SK-N-SH (cell line): ENCODE measurements at regions of chr2 and their contacts with region 1.

Region 1: GRCh38 chr2:26605195-26605998 is 35.8 kb downstream of the CIB4 start:
- DNase-seq: peak; percentile 78
- H3K4me3 ChIP-seq: no peak overlapping the region; a peak in 1 of 4 replicates
- H3K27ac ChIP-seq: no peak overlapping the region
- H3K4me1 ChIP-seq: no peaks in the 10 kb centered on the region; a peak in 1 of 4 replicates
- H3K27me3 ChIP-seq: peaks cover 21% of the 10 kb centered on the region
- CTCF ChIP-seq: peak; percentile 94
- EP300 ChIP-seq: no peak
- RAD21 ChIP-seq: peak; percentile 99

Region 2: GRCh38 chr2:26633351-26633945 is 28.1 kb after region 1 on chr2:
- CTCF ChIA-PET with region 1: interaction called, 16 read pairs
- POLR2A ChIA-PET with region 1: no interaction called
- DNase-seq: no peak
- H3K4me3 ChIP-seq: no peak overlapping the region
- H3K27ac ChIP-seq: no peak overlapping the region
- H3K4me1 ChIP-seq: peaks cover 0 to 15% of the 10 kb centered on the region in 2 experiments; a peak in 1 of 4 replicates
- H3K27me3 ChIP-seq: 0 out of 2 replicates have a peak, but pooled peaks cover 26% of the 10 kb centered on the region
- CTCF ChIP-seq: no peak
- EP300 ChIP-seq: no peak
- RAD21 ChIP-seq: no peak

Region 3: DNA sequence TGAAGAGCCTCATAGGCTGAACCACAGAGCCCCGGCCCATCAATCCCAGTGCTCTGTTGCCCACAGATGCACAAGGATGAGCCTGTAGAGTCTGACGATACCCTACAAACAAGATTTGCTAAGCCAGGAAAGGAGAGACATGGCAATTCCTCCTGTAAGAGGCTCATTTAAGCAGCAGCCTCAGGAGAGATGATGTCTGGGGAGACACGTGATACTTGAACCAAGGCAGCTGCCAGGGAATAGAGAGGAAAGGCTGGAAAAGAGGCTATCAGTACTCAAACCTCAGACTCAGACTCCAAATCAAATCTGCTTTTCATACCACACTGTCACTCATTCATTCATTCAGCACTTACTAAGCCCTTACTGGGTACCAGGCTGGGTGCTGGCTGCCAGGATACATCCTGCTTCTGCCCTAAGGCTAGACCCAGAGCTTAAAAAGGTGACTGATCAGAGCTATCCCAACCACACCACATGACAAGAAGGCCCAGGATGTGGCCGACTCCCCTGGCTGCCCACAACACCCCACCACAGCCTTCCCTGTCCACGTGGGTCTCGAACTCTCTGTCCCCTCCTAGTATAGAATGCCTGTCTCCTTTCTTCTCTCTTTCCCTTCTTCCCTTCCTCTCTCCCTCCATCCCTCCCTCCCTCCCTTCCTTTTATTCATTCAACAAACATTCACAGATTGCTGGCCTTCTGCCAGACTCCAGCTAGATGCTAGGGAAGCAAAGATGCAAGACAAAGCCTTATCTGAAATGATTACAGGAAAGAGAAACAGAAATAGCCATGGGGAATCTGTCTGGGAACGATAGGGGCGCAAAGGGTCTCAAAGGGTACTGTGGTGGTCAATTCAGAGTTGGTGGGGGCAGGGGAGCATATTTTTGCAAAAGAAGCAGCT is 63.7 kb after region 1 on chr2:
- CTCF ChIA-PET with region 1: interaction called, 14 read pairs
- POLR2A ChIA-PET with region 1: no interaction called
- DNase-seq: no peak
- H3K4me3 ChIP-seq: no peak overlapping the region
- H3K27ac ChIP-seq: no peak overlapping the region
- H3K4me1 ChIP-seq: peaks cover 0 to 3% of the 10 kb centered on the region in 2 experiments; a peak in 1 of 4 replicates
- H3K27me3 ChIP-seq: peaks cover 23% of the 10 kb centered on the region; the same call in 1 of the 2 replicates
- CTCF ChIP-seq: no peak
- EP300 ChIP-seq: no peak; a peak in 1 of 4 replicates
- RAD21 ChIP-seq: no peak

Region 4: DNA sequence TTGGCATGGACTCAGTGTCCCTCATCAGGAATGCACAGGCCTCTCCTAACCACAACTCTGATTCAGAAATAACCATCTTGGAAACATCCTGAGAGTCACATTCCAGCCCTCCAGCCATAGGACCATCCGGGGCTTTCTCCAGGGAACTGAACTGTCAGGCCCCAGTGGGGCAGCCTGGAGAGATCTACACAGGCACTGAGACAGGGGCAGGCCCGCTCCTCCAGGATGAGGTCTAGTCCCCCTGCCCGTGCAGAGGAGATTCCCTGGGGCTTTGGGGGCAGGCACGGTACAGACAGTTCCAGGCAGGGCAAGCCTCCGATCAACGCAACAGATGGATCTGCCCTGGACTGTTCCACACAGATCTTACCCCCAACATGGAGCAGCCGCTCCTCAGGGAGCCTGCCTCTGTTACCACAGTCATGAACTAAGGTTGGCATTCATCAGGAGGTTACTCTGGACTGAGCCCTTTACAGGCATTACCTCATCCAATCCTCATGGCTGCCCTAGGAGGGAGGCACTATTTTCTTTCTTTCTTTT is 99.1 kb after region 1 on chr2:
- CTCF ChIA-PET with region 1: interaction called, 70 read pairs
- POLR2A ChIA-PET with region 1: no interaction called
- DNase-seq: no peak
- H3K4me3 ChIP-seq: no peak overlapping the region
- H3K27ac ChIP-seq: peak overlapping the region in 1 of 2 experiments; percentile 27; a peak in 1 of 4 replicates
- H3K4me1 ChIP-seq: peaks cover 9 to 44% of the 10 kb centered on the region in 2 experiments; a peak in 2 of 4 replicates
- H3K27me3 ChIP-seq: no peaks in the 10 kb centered on the region
- CTCF ChIP-seq: no peak
- EP300 ChIP-seq: no peak
- RAD21 ChIP-seq: no peak

Region 5: GRCh38 chr2:26757873-26758789 is 152.7 kb after region 1 on chr2:
- CTCF ChIA-PET with region 1: interaction called, 62 read pairs
- POLR2A ChIA-PET with region 1: no interaction called
- DNase-seq: peak; percentile 5
- H3K4me3 ChIP-seq: no peak overlapping the region
- H3K27ac ChIP-seq: peak overlapping the region; percentile 53 to 78
- H3K4me1 ChIP-seq: peaks cover 9 to 15% of the 10 kb centered on the region in 2 experiments; a peak in 3 of 4 replicates
- H3K27me3 ChIP-seq: no peaks in the 10 kb centered on the region
- CTCF ChIP-seq: no peak
- EP300 ChIP-seq: peak in 1 of 2 experiments; percentile 83; a peak in 1 of 4 replicates
- RAD21 ChIP-seq: no peak